ENCODE measurements at regions of chr1 and their contacts with region 1.

Region 1: DNA sequence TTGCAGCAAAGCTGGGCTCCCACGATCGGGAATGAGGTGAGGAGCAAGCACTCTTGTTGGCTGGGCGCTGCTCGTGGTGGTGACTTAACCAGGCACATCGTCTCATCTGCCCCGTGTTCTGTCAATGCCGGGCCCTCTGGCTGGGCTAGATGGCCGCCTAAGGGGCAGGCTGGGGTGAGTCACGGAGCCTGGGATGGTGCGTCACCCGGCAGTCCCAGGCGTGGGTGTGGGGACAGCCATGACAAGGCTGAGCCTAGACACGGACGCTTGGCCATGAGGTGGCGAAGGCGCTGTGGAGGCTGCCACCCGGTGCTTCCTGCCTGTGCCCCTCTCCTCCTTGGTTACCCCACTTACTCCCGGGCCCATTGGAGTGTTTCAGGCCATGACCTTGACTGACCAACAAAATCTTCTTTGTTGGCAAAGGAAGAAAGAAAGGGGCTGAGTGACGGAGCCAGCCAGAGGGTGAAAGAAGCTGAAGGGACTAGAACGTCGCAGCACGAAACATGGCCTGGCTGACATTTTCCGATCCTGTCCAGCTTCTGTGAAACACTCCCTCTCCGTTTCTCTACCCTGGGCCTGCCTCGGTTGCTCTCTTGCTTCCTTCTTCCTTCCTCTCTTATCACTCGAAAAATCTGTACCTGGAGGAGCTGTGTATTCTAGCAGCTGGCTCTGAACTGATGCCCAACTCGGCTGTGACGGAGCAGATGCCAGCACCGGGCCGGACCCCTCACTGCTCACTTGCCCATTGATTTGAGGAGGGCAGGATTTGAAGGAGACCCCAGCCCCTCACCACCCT is 596 bp downstream of the CD247 start:
- DNase-seq: peak; percentile 71 to 94 (median 76)
- H3K4me3 ChIP-seq: peak overlapping the region; percentile 82 to 83
- H3K4me3 Mint-ChIP-seq: peak overlapping the region; percentile 95 to 100 (median 99)
- H3K27ac ChIP-seq: peak overlapping the region; percentile 94
- H3K27ac Mint-ChIP-seq: peak overlapping the region; percentile 97 to 100 (median 99)
- H3K4me1 ChIP-seq: peaks cover 49% of the 10 kb centered on the region
- H3K4me1 Mint-ChIP-seq: peaks cover 22 to 70% (median 37%) of the 10 kb centered on the region in 4 donors
- H3K27me3 ChIP-seq: no peaks in the 10 kb centered on the region
- H3K27me3 Mint-ChIP-seq: no peaks in the 10 kb centered on the region

Region 2: GRCh38 chr1:167344112-167344511 is 173.6 kb before region 1 on chr1:
- CTCF ChIA-PET with region 1: no interaction called
- POLR2A ChIA-PET with region 1: no interaction called
- intact Hi-C with region 1: no loop called
- DNase-seq: no peak
- H3K4me3 ChIP-seq: no peak overlapping the region
- H3K4me3 Mint-ChIP-seq: no peak overlapping the region
- H3K27ac ChIP-seq: no peak overlapping the region
- H3K27ac Mint-ChIP-seq: no peak overlapping the region
- H3K4me1 ChIP-seq: no peaks in the 10 kb centered on the region
- H3K4me1 Mint-ChIP-seq: peaks cover 4 to 11% (median 8%) of the 10 kb centered on the region in 4 donors
- H3K27me3 ChIP-seq: no peaks in the 10 kb centered on the region
- H3K27me3 Mint-ChIP-seq: no peaks in the 10 kb centered on the region

Region 3: DNA sequence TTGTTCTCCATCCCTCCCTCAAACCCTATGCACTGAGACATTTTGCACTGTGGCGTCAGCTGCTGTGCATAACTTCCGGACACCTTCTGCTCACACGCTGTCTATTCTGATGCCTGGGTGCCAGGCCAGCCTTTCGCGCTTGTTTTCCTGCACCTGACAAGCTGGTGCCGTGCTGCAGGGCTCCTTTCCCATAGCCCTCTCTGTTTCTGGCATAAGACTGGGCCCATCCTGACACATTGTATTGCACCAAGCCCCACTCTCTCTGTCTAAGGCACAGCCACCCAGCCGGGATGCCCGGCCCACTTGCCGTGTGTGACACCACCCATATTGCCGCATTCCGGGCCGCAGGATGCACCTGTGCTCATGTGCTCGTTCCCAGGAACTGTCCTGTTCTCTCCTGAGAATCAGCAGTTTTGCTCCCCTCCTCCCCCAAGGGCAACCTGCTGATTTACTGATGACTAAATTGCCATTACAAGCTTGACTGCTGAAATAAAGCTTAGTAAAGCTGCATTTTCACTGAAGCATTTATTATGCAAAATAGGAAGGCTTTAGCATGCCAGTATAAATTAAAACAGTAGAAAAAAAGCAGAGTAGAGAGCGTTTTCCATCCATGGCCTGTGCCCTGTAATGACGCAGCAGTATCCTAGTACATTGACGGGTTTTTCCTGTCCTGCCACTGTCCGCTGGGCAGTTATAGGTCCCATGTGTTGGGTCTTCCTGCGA is 87.4 kb before region 1 on chr1:
- CTCF ChIA-PET with region 1: interaction called, 13 read pairs
- POLR2A ChIA-PET with region 1: interaction called, 18 read pairs
- intact Hi-C with region 1: no loop called
- DNase-seq: no peak
- H3K4me3 ChIP-seq: no peak overlapping the region
- H3K4me3 Mint-ChIP-seq: peak overlapping the region in 1 of 8 donors; percentile 47
- H3K27ac ChIP-seq: no peak overlapping the region
- H3K27ac Mint-ChIP-seq: peak overlapping the region; percentile 10 to 89 (median 70)
- H3K4me1 ChIP-seq: peaks cover 53% of the 10 kb centered on the region
- H3K4me1 Mint-ChIP-seq: peaks cover 27 to 48% (median 35%) of the 10 kb centered on the region in 4 donors
- H3K27me3 ChIP-seq: no peaks in the 10 kb centered on the region
- H3K27me3 Mint-ChIP-seq: no peaks in the 10 kb centered on the region

Region 4: DNA sequence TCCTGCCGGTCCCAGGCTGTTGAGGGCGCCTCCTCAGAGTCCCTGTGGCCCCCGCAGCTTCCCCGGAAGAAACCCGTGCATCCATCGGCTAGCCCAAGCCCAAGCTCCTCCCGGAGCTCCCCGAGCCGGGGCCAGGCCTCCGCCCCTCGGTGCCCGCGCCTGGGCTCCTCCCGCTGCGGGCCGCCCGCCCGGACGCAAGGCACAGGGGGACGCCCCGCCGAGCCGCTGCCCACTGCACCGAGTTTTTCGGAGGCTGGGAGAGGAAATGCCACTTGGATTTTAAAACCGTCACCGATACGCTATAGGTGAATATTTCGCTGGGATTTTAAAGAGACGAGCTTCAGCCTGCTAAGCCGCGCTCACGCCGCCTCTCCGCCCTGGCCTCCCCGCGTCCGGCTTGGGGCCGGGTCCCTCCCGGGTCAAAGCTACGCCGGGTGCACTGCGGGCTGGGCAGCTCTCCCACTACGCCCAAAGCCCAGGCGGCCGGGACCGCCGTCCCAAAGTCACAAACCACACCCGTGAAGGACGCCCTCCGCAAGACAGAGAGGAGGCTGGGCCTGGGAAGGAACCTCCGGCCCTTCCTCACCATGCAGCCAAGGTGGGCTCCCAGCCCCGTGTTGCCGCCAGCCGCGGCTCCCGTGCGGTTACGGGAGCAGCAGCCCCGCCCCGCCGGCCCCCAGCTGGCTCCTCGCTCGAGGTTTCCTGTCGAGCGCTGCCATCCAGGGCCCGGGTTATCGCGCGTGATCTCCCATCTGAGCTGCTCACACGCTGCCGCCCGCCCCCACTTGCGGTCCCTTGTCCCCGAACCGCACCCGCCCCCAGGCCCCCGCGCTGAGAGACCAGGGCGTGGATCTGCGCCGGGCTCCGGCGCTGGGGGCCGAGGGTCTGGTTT is 62.6 kb before region 1 on chr1:
- CTCF ChIA-PET with region 1: interaction called, 38 read pairs
- POLR2A ChIA-PET with region 1: interaction called, 230 read pairs
- intact Hi-C with region 1: loop called (anchors 1 kb)
- DNase-seq: peak; percentile 81 to 92 (median 84)
- H3K4me3 ChIP-seq: peak overlapping the region; percentile 29 to 85
- H3K4me3 Mint-ChIP-seq: peak overlapping the region; percentile 70 to 88 (median 86)
- H3K27ac ChIP-seq: peak overlapping the region; percentile 88
- H3K27ac Mint-ChIP-seq: peak overlapping the region; percentile 51 to 98 (median 91)
- H3K4me1 ChIP-seq: peaks cover 83% of the 10 kb centered on the region
- H3K4me1 Mint-ChIP-seq: peaks cover 58 to 82% (median 63%) of the 10 kb centered on the region in 4 donors
- H3K27me3 ChIP-seq: no peaks in the 10 kb centered on the region
- H3K27me3 Mint-ChIP-seq: no peaks in the 10 kb centered on the region

Region 5: DNA sequence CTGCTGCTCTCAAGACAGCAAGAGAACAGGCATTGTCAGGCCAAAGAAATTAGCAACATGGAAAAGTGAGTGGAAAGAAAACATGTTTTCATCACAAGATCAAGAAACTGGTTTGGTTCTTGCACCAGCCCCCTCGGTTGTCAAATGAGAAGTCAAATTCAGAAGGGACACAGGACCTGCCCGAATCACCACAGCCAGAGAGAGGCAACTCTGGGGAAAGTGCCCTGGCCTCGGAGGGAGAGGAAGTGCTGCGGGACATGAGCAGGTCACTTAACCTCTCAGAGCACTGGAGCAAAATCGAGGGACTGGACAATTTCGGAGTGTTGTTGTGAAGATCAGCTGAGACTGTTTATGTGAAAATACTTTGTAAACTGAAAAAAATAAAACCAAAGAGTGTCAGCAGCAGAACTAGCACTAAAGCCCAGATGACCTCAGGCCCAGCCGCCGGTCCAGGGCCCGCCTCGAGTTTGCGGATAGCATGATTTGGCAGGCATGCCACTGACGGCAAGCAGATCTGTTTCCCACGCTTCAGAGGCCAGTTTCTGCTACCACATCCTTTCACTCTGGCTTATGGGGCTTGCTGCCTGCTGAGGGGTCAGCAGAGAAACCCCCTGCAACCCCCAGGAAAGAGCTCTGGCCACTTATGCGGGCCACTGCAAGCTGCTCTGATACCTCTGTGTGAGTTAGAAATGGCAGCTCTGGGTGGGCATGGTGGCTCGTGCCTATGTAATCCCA is 31.5 kb before region 1 on chr1:
- CTCF ChIA-PET with region 1: interaction called, 7 read pairs
- POLR2A ChIA-PET with region 1: interaction called, 137 read pairs
- intact Hi-C with region 1: loop called (anchors 5 kb)
- DNase-seq: peak in 1 of 5 donors; percentile 46
- H3K4me3 ChIP-seq: no peak overlapping the region
- H3K4me3 Mint-ChIP-seq: peak overlapping the region; percentile 38 to 89 (median 75)
- H3K27ac ChIP-seq: peak overlapping the region; percentile 55
- H3K27ac Mint-ChIP-seq: peak overlapping the region; percentile 52 to 100 (median 94)
- H3K4me1 ChIP-seq: peaks cover 99% of the 10 kb centered on the region
- H3K4me1 Mint-ChIP-seq: peaks cover 76 to 100% (median 90%) of the 10 kb centered on the region in 4 donors
- H3K27me3 ChIP-seq: no peaks in the 10 kb centered on the region
- H3K27me3 Mint-ChIP-seq: no peaks in the 10 kb centered on the region

Region 6: DNA sequence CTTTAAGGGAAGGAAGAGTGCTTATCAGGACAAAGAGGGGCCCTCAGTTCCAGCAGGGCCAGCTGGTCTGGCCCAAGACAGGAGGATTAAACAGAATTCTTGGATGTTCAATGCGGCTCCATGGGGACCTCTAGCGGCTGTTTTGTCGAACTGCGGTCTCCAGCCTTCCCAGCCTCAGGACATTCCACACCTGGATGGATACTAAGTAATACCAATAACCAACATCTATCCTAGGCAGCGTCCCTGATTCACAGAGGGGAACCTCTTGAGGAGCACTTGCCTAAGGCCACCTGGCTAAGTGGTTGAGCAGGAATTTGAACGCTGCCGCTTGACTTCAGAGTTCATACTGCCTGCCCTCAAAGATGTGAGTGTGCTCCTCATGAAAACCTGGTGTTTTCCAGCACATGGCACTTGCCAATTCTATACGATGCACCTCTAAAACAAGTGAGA is 16.1 kb after region 1 on chr1:
- CTCF ChIA-PET with region 1: interaction called, 146 read pairs
- POLR2A ChIA-PET with region 1: interaction called, 27 read pairs
- intact Hi-C with region 1: loop called (anchors 1 kb)
- DNase-seq: peak; percentile 55 to 65 (median 60)
- H3K4me3 ChIP-seq: no peak overlapping the region
- H3K4me3 Mint-ChIP-seq: no peak overlapping the region
- H3K27ac ChIP-seq: no peak overlapping the region
- H3K27ac Mint-ChIP-seq: no peak overlapping the region
- H3K4me1 ChIP-seq: no peaks in the 10 kb centered on the region
- H3K4me1 Mint-ChIP-seq: peaks cover 3 to 4% (median 3%) of the 10 kb centered on the region in 4 donors
- H3K27me3 ChIP-seq: no peaks in the 10 kb centered on the region
- H3K27me3 Mint-ChIP-seq: no peaks in the 10 kb centered on the region

Region 7: DNA sequence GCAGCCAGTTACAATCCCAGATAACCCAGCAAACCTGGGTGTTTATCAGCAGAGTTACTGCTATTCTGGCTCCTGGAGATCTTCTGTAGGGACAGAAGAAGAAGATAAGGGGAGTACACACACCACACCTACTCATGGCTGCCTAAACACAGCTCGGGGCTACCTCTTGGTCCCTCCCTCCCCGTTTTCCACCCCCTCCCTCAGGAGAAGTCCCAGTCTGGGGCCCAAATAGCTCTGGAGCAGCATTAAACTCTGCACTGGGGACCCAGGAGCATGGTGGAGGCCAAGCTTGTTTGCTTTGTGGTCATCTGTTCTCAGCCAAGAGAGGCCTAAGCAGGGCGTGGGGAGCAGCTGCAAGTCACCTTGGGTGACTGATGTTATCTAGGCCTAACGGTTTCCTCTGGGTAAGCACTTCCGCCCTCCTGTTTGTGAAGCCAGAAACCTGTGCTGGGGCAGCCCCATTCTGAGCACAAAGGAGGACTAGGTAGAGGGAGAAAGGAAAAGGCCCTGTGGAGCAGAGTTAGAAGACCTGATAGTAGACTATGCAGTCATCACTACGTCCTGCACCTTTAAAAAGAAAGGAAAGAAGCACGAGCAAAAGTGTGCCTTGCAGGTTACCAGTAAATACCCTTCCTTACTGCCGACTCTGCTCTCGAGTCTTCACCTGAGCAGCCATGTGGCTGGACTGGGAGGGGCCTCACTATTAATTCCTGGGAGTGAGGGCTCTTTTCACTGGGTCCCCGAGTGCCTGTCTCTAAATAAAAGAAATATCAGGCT is 110.3 kb after region 1 on chr1:
- CTCF ChIA-PET with region 1: no interaction called
- POLR2A ChIA-PET with region 1: interaction called, 17 read pairs
- intact Hi-C with region 1: no loop called
- DNase-seq: peak; percentile 78 to 95 (median 81)
- H3K4me3 ChIP-seq: peak overlapping the region; percentile 74 to 82
- H3K4me3 Mint-ChIP-seq: peak overlapping the region; percentile 90 to 99 (median 94)
- H3K27ac ChIP-seq: peak overlapping the region; percentile 90
- H3K27ac Mint-ChIP-seq: peak overlapping the region; percentile 94 to 99 (median 96)
- H3K4me1 ChIP-seq: peaks cover 56% of the 10 kb centered on the region
- H3K4me1 Mint-ChIP-seq: peaks cover 46 to 81% (median 54%) of the 10 kb centered on the region in 4 donors
- H3K27me3 ChIP-seq: no peaks in the 10 kb centered on the region
- H3K27me3 Mint-ChIP-seq: no peaks in the 10 kb centered on the region

Region 8: GRCh38 chr1:167746988-167747655 is 229.4 kb after region 1 on chr1:
- CTCF ChIA-PET with region 1: no interaction called
- POLR2A ChIA-PET with region 1: no interaction called
- intact Hi-C with region 1: no loop called
- DNase-seq: no peak
- H3K4me3 ChIP-seq: no peak overlapping the region
- H3K4me3 Mint-ChIP-seq: no peak overlapping the region
- H3K27ac ChIP-seq: no peak overlapping the region
- H3K27ac Mint-ChIP-seq: no peak overlapping the region
- H3K4me1 ChIP-seq: no peaks in the 10 kb centered on the region
- H3K4me1 Mint-ChIP-seq: no peaks in the 10 kb centered on the region
- H3K27me3 ChIP-seq: no peaks in the 10 kb centered on the region
- H3K27me3 Mint-ChIP-seq: no peaks in the 10 kb centered on the region

Region 9: GRCh38 chr1:168261390-168261789 is 743.7 kb after region 1 on chr1:
- CTCF ChIA-PET with region 1: no interaction called
- POLR2A ChIA-PET with region 1: no interaction called
- intact Hi-C with region 1: no loop called
- DNase-seq: no peak
- H3K4me3 ChIP-seq: no peak overlapping the region
- H3K4me3 Mint-ChIP-seq: no peak overlapping the region
- H3K27ac ChIP-seq: no peak overlapping the region
- H3K27ac Mint-ChIP-seq: peak overlapping the region in 1 of 7 donors; percentile 37
- H3K4me1 ChIP-seq: no peaks in the 10 kb centered on the region
- H3K4me1 Mint-ChIP-seq: peaks cover 16 to 28% (median 20%) of the 10 kb centered on the region in 4 donors
- H3K27me3 ChIP-seq: no peaks in the 10 kb centered on the region
- H3K27me3 Mint-ChIP-seq: no peaks in the 10 kb centered on the region

Measured in CD4-positive, alpha-beta memory T cell (primary cell).